A549 (cell line): ENCODE measurements at regions of chr17 and their contacts with region 1.

Region 1: GRCh38 chr17:82217530-82218204 is 5.0 kb upstream of the CCDC57 start:
- DNase-seq: peak in 1 of 2 experiments; percentile 83
- ATAC-seq: peak in 1 of 2 experiments; percentile 31; a peak in 3 of 6 replicates
- H3K4me3 ChIP-seq: no peak overlapping the region
- H3K27ac ChIP-seq: peak overlapping the region; percentile 96
- H3K4me1 ChIP-seq: peaks cover 57% of the 10 kb centered on the region
- CTCF ChIP-seq: no peak
- EP300 ChIP-seq: peak in 1 of 2 experiments; percentile 45; a peak in 1 of 5 replicates
- POLR2A ChIP-seq: no peak
- RAD21 ChIP-seq: no peak

Region 2: DNA sequence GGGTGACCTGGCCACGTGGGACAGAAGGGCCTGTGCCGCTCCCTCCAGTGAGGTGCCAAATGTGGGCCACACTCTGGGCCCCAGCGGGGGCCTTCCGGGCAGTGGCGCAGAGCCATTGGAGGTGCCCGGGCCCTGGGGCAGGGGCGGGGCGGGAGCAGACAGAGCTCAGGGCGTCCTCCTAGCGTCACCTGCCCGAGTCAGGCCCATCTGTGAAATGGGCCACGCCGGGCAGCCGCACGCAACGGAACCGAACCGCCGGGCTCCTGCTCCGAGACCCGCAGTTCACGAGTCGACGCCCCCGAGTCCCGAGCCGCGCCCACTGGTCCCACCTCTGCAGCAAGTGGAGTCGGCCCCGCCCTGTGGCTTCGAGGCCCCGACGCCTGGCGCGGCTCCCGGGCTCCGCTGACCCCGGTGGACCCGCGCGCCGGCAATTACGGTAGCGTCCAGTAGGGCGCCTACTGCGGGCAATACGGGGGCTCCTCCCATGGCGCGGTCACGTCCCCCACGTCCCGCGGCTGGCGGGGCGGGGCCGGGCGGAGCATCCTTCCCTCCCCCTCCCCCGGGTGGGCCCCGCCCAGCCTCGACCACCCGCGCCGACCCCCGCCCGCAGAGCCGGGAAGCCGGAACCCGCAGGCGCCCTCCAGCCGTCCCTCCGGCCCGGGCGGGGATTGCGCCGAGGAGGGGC is 13.1 kb after region 1 on chr17:
- CTCF ChIA-PET with region 1: interaction called, 25 read pairs
- POLR2A ChIA-PET with region 1: interaction called, 8 read pairs
- DNase-seq: peak; percentile 79 to 92
- ATAC-seq: peak; percentile 42 to 73
- H3K4me3 ChIP-seq: peak overlapping the region; percentile 65
- H3K27ac ChIP-seq: peak overlapping the region; percentile 95 to 99
- H3K4me1 ChIP-seq: peaks cover 50% of the 10 kb centered on the region
- CTCF ChIP-seq: 0 out of 3 replicates have a peak, but pooled peaks have one; percentile 12
- EP300 ChIP-seq: no peak
- POLR2A ChIP-seq: no peak; the same call in 1 of the 2 replicates
- RAD21 ChIP-seq: no peak; a peak in 1 of 5 replicates